ENCODE measurements at regions of chr17 and their contacts with region 1.

Region 1: GRCh38 chr17:50904521-50905459 is 38.6 kb upstream of the TOB1 start:
- DNase-seq: peak; percentile 78
- ATAC-seq: peak; percentile 74
- H3K4me3 ChIP-seq: peak overlapping the region; percentile 48 to 76 (median 52)
- H3K27ac ChIP-seq: peak overlapping the region; percentile 93
- H3K4me1 ChIP-seq: peaks cover 93% of the 10 kb centered on the region
- H3K27me3 ChIP-seq: no peaks in the 10 kb centered on the region
- CTCF ChIP-seq: peak; percentile 51
- EP300 ChIP-seq: peak in 1 of 2 experiments; percentile 58; a peak in 2 of 4 replicates
- POLR2A ChIP-seq: peak in 1 of 2 experiments; percentile 62; a peak in 1 of 4 replicates
- RAD21 ChIP-seq: peak; percentile 31; the same call in 1 of the 2 replicates

Region 2: DNA sequence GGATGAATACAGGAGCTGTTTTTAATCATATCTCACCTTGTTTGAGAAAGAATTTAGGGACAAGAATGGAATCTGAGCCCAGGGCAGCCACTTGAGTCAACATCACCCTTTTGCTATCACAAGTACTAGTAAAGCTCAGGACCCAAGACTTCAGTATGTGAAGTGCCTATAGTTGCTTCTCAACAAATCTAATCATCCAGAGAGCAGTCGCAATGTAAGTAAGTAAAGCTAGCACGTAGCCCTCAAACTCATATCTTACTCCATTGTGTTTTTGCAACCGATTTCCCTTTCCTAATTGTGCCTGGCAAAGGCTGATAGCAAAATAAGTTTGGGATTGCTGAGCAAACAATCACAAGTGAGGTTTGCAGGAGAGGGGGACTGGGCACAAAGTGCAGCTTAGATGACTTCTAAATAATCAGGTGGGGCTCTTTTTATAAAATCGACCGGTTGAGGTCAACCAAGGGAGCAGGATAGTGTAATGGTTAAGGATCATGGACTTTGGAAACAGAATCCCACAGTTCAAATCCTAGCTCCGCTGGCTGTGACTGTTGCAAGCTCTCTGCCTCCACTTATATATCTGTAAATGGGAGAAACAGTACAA is 51.7 kb before region 1 on chr17:
- CTCF ChIA-PET with region 1: interaction called, 7 read pairs
- POLR2A ChIA-PET with region 1: interaction called, 33 read pairs
- in situ Hi-C with region 1: no loop called
- intact Hi-C with region 1: no loop called
- DNase-seq: peak; percentile 74
- ATAC-seq: peak; percentile 46
- H3K4me3 ChIP-seq: peak overlapping the region; percentile 29 to 64 (median 56); a peak in 5 of 6 replicates
- H3K27ac ChIP-seq: peak overlapping the region; percentile 49
- H3K4me1 ChIP-seq: peaks cover 76% of the 10 kb centered on the region
- H3K27me3 ChIP-seq: peaks cover 0 to 8% of the 10 kb centered on the region in 2 experiments; a peak in 2 of 5 replicates
- CTCF ChIP-seq: no peak
- EP300 ChIP-seq: peak in 1 of 2 experiments; percentile 77; a peak in 2 of 4 replicates
- POLR2A ChIP-seq: no peak
- RAD21 ChIP-seq: no peak

Region 3: DNA sequence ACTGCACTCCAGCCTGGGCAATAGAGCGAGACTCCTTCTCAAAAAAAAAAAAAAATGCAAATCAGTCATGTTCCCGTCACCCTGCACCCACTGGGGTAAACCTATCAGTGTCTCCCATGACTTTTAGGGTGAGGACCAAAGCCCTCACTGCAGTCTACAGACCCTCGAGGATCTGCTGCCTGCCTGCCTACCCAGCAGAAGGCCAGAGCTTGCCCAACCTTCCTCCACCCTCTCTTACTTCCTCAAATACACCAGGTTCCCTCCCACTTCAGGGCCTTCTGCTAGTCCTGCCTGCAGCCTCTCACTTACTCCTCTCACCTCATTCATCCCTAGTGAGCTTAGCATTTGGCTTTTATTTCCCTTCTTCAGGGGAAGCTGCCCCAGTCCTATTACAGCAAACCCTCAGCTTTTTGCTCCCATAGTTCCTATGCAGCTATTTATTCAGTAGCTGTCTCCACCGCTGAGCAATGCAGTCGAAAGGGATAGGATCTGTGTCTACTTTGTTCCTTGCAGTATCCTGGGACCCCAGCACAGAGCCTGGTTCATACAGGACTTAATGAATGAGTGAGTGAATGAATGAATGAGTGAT is 20.8 kb before region 1 on chr17:
- CTCF ChIA-PET with region 1: no interaction called
- POLR2A ChIA-PET with region 1: interaction called, 185 read pairs
- in situ Hi-C with region 1: no loop called
- intact Hi-C with region 1: no loop called
- DNase-seq: no peak
- ATAC-seq: peak; percentile 47
- H3K4me3 ChIP-seq: peak overlapping the region; percentile 2 to 54 (median 41); a peak in 4 of 6 replicates
- H3K27ac ChIP-seq: peak overlapping the region; percentile 67
- H3K4me1 ChIP-seq: peaks cover 62% of the 10 kb centered on the region
- H3K27me3 ChIP-seq: no peaks in the 10 kb centered on the region
- CTCF ChIP-seq: no peak
- EP300 ChIP-seq: no peak; a peak in 1 of 4 replicates
- POLR2A ChIP-seq: no peak
- RAD21 ChIP-seq: no peak

Region 4: DNA sequence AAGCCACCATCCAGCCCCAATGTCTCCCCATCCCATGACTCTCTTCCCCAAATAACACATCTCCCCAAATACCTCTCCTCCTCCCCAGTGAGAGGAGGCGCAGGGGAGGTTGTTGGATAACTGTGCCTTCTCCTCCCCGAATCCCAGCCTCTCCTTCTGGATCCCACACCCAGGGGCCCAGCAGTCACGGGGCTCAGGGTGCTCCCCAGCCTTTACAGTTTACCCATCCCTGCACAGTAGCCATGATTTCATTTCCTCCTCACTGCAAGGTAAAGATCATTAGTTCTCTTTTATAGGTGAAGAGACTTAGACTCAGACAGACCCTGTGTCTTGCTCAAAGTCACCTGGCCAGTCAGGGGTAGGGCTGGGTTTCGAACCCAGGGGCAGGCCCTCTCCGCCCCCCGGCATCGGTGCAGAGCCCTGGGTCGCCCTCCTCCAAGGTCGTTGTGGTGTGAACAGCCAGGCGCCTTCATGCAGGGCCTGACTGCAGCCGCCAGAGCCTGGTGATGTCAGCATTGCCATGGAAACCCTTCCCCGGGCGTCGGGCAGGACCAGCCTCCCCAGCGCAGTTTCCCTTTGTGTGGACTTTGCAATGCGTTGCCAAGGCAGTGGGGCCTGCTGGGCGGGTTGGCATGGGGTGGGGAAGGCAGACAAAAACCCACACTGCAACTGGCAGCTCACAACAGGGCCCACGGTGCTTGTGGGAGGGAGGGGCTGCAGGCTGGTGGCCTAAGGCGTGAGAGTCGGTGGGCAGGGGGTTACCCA is 14.7 kb after region 1 on chr17:
- CTCF ChIA-PET with region 1: no interaction called
- POLR2A ChIA-PET with region 1: interaction called, 145 read pairs
- in situ Hi-C with region 1: no loop called
- intact Hi-C with region 1: no loop called
- DNase-seq: peak; percentile 86
- ATAC-seq: peak; percentile 74
- H3K4me3 ChIP-seq: peak overlapping the region in 2 of 3 experiments; percentile 31 to 65; a peak in 3 of 6 replicates
- H3K27ac ChIP-seq: peak overlapping the region; percentile 5
- H3K4me1 ChIP-seq: peaks cover 100% of the 10 kb centered on the region
- H3K27me3 ChIP-seq: 0 out of 5 replicates have a peak, but pooled peaks cover 0 to 2% of the 10 kb centered on the region in 2 experiments
- CTCF ChIP-seq: peak; percentile 19
- EP300 ChIP-seq: no peak
- POLR2A ChIP-seq: no peak
- RAD21 ChIP-seq: 0 out of 2 replicates have a peak, but pooled peaks have one; percentile 9

Region 5: DNA sequence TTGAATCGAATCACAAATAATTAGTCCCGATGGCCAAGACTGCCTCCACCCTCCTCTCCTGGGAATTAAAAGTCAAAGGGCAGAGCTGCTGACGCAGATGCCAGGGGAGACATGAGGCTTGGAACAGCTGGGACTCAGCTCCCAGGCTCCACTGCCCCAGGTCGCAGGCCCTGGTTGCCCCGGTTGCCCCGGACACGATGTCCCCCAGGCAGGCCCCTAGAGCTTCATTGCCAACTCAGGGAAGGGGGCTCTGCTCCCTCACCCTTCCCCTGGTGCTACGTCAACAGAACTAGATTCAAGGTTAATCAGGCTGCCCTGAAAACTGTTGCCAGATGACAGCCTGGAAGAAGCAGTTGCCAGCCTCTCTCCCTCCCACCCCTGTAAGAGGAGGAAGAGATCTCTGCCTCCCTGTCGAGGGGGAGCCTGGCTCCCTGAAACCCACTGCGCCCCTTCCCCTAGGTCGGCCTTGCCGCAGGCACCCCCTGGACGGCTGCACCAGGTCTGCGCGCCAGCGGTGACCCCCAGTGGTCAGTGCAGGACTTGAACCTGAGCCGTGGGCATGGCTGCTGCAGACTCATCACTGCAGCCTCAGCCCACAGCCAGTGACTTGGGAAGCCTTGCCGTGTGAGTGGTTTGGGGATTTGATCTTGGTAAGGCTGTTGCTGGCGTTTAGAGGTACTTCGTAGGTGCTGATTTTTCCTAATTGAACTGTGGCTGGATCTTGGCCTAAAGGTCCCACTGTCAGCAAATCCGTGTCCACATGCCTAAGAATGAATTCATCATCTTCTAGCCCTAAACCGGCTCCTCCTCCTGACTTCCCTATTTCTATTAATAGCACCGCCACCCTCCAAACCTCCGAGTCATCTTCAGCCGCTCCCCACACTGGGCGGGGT is 45.4 kb after region 1 on chr17:
- CTCF ChIA-PET with region 1: no interaction called
- POLR2A ChIA-PET with region 1: interaction called, 125 read pairs
- in situ Hi-C with region 1: no loop called
- intact Hi-C with region 1: loop called (anchors 1 kb)
- DNase-seq: peak; percentile 65
- ATAC-seq: peak; percentile 81
- H3K4me3 ChIP-seq: peak overlapping the region; percentile 10 to 69 (median 27); a peak in 5 of 6 replicates
- H3K27ac ChIP-seq: peak overlapping the region; percentile 34
- H3K4me1 ChIP-seq: peaks cover 85% of the 10 kb centered on the region
- H3K27me3 ChIP-seq: no peaks in the 10 kb centered on the region
- CTCF ChIP-seq: peak; percentile 100
- EP300 ChIP-seq: no peak
- POLR2A ChIP-seq: no peak
- RAD21 ChIP-seq: peak; percentile 100

Region 6: GRCh38 chr17:50963139-50963538 is 58.3 kb after region 1 on chr17:
- CTCF ChIA-PET with region 1: no interaction called
- POLR2A ChIA-PET with region 1: no interaction called
- in situ Hi-C with region 1: no loop called
- intact Hi-C with region 1: no loop called
- DNase-seq: no peak
- ATAC-seq: no peak
- H3K4me3 ChIP-seq: no peak overlapping the region
- H3K27ac ChIP-seq: no peak overlapping the region
- H3K4me1 ChIP-seq: peaks cover 23% of the 10 kb centered on the region
- H3K27me3 ChIP-seq: no peaks in the 10 kb centered on the region
- CTCF ChIP-seq: no peak
- EP300 ChIP-seq: no peak
- POLR2A ChIP-seq: no peak
- RAD21 ChIP-seq: no peak

Region 7: GRCh38 chr17:50976951-50977472 is 72.2 kb after region 1 on chr17:
- CTCF ChIA-PET with region 1: no interaction called
- POLR2A ChIA-PET with region 1: no interaction called
- in situ Hi-C with region 1: no loop called
- intact Hi-C with region 1: no loop called
- DNase-seq: no peak
- ATAC-seq: no peak
- H3K4me3 ChIP-seq: no peak overlapping the region
- H3K27ac ChIP-seq: peak overlapping the region; percentile 58
- H3K4me1 ChIP-seq: peaks cover 42% of the 10 kb centered on the region
- H3K27me3 ChIP-seq: no peaks in the 10 kb centered on the region
- CTCF ChIP-seq: no peak
- EP300 ChIP-seq: no peak
- POLR2A ChIP-seq: no peak
- RAD21 ChIP-seq: no peak